ENCODE measurements at regions of chr2 and their contacts with region 1.

Region 1: DNA sequence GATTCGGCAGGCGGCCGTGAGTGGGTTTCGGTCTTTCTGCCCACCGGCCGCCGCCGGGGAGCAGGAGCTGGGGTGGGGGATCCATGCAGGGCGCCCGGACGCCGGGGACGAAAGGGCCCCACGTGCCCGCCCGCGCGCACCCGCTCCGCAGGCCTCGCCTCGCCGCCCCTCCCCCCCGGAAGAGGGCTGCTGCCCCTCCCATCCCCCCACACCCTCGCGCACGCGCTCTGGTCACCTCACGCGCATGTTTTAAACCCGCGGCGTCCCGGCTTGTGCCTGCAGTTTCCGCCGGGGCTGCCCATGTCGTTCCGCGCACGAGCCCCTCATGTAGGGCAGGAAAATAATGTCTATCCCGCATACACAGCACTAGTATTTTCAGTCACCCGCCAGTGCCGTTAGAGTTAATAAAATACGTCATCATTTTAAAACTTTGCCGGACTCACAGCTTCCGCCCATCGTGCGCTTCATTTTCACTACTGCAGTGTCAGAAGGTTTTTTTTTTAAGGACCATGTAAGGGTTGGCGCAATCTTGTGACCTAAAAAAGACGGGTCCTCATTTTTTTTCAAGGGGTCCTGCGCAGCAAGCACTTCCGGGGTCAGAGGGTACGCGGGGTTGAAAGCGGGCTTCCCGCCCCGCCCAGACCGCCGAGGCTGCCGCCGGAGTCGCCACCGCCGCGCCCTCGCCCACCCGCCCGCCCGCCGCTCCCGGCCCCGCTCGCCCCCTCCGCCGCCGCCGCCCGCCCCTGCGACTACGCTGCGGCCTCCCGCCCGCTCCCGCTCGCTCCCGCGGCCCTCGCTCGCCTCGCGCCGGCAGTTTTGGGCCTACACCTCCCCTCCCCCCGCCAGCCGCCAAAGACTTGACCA is at the start of gene PCBP1:
- DNase-seq: peak; percentile 98
- ATAC-seq: peak; percentile 89
- total RNA-seq, gene PCBP1: 203 TPM

Region 2: DNA sequence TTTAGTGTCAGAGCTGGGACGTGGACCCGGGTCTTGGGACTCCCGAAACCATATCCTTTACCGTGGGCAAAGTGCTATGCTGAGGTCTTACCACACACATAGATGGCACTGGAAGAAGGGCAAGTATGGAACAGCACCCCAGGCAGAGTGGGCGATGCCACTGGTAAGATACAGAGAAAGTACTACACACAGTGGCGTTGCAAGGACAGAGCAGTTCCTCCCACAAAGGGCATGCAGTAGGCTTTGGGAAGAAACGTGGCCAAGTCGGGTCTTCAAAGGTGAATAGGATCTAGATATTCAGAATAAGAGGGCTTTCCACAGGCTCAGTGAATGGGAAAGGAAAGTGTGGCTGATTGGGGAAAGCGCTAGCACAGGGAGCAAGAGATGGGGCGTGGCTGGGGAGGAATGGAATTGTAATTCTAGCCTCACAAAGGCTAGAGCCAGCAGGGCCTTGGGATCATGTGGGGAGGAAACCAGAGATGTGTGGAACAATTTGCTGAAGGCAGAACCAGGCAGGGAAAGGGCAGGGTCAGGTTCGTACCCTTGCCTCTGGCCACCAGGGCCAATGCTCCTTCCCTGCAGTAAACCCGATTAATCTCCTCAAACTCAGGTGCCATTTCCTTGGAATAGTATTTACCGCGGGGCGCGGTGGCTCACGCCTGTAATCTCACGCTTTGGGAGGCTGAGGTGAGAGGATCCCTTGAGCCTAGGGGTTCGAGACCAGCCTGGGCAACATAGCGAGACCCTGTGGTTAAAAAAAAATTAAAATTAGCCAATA is 36.2 kb after region 1 on chr2:
- intact Hi-C with region 1: loop called (anchors 1 kb)
- DNase-seq: no peak
- ATAC-seq: peak; percentile 71

Region 3: GRCh38 chr2:70142590-70143313 is 55.7 kb after region 1 on chr2:
- intact Hi-C with region 1: loop called (anchors 1 kb)
- DNase-seq: peak; percentile 100
- ATAC-seq: peak; percentile 90

Region 4: DNA sequence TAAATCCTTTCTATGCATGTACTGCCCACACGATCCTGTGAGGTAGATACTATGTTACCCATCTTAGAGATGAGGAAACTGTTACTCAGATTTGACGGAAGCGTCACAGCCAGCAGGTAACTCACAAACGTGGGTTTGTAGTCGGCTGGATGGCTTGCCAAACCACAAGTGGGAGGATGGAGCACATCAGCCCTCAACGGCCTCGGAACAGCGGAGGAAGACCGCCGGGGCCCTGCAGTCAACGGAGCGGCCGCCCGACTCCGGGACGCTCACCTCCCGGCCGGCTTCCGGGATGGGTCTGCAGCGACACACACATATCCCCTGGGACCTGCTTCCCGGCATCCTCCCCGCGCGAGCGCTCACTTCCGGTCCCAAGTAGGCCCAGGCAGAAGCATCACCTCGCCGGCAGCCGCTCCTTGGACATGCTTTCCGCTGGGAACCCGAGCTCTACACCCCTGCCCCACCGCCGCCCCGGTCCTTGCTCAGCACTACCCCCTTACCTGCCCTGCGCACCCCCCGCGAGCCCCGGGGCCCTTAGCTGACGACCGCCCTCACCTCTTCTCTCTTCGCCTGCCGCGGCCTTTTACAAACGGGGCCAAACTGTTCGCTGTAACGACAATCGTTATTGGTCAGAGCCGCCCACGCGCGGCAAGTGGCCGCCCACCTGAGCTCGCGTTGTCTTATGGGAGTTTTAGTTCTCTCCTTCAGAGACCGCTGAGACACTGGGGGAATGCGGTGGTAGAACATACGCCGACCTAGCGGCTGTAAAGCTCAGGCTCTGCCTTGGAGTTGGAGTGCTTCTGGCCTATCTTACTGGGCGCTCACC is 103.6 kb after region 1 on chr2 and contains the start of gene C2orf42:
- intact Hi-C with region 1: loop called (anchors 5 kb)
- DNase-seq: peak; percentile 96
- ATAC-seq: peak; percentile 98
- total RNA-seq, gene C2orf42: 14.1 TPM

Region 5: GRCh38 chr2:70516596-70516995 is 429.5 kb after region 1 on chr2:
- intact Hi-C with region 1: no loop called
- DNase-seq: no peak
- ATAC-seq: no peak